ENCODE measurements at regions of chr15 and their contacts with region 1.

Region 1: GRCh38 chr15:38868326-38869114 is 303.9 kb upstream of the RASGRP1 start:
- DNase-seq: peak; percentile 84

Region 2: GRCh38 chr15:38482572-38482971 is 385.9 kb before region 1 on chr15:
- intact Hi-C with region 1: loop called in 1 of 2 experiments (anchors 5 kb)
- DNase-seq: no peak

Region 3: DNA sequence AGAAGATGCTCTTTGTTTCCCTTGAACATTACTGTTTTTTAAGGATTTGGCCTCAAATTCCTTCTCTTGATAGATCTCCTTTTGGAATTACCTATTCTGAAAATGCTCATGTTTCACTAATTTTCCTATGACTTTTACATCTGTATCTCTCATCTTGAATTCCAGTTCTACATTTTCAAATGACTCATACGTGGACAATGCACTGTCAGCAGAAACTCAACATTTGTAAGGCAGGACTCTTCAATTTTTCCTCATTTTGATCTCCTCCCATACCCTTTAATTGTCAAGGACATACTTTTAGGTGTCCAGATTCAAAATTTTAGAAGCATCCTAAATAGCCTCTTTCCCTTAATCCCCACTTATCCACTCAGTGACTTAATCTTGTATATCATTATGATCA is 37.1 kb after region 1 on chr15:
- intact Hi-C with region 1: no loop called
- DNase-seq: no peak